AG04449 (cell line): ENCODE measurements at regions of chr11 and their contacts with region 1.

Region 1: GRCh38 chr11:61254403-61255025 is 13.5 kb downstream of the PGA5 start:
- DNase-seq: no peak
- H3K4me3 ChIP-seq: no peak overlapping the region
- CTCF ChIP-seq: peak; percentile 95

Region 2: GRCh38 chr11:61129639-61130523 is 124.6 kb before region 1 on chr11:
- CTCF ChIA-PET with region 1: no interaction called
- POLR2A ChIA-PET with region 1: no interaction called
- DNase-seq: peak; percentile 65
- H3K4me3 ChIP-seq: peak overlapping the region; percentile 36
- CTCF ChIP-seq: peak; percentile 100

Region 3: DNA sequence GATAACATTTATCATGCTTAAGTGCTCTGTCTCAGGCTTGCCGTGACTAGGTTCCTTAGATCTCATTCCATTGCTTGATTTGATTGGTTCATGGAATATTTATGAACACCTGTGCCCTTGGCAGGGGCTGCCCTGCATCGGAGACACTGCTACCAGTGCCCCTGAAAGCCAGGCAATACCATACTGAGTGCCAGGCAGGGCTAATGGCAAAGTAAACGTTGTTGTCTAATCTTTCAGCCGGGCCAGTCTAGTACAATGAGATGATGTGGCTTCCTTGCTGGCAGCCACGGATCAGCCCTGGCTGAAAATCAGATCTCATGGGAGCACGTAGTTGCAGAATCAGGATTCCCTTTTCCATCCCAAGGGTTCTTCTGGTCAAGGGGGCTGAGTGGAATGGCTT is 56.2 kb before region 1 on chr11:
- CTCF ChIA-PET with region 1: no interaction called
- POLR2A ChIA-PET with region 1: no interaction called
- DNase-seq: no peak
- H3K4me3 ChIP-seq: no peak overlapping the region
- CTCF ChIP-seq: no peak

Region 4: GRCh38 chr11:61270354-61271076 is 16.0 kb after region 1 on chr11:
- CTCF ChIA-PET with region 1: interaction called, 99 read pairs
- POLR2A ChIA-PET with region 1: no interaction called
- DNase-seq: peak; percentile 9
- H3K4me3 ChIP-seq: no peak overlapping the region
- CTCF ChIP-seq: no peak

Region 5: DNA sequence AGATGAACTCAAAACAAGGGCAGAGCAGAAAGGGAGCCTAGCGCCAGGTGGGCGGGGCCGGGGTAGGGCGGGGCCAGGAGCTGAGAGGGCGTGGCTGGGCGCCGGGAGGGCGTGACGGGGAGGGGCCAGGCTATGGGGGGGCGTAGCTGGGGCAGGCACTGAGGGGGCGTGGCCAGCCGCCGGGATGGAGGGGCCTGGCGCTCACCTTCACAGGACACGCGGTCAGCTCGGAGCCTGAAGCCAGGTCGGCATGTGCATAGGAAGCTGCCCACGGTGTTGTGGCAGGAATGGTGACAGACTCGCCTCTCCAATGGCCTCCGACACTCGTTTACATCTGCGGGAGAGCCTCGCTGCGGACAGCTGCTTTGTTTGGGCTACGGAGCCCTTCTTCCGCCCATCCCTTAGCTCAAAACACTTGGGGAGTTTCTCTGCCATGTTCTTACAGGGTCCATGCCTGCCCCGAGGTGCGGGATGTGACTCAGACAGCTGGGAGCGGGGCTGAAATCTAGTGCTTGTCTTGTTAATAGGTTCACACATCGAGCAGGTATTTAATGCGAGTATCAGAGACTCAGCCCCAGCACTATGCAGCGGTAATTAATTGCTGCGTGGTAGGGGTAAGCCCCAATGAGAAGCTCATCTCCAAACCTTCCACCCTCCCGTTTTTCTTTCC is 27.2 kb after region 1 on chr11:
- CTCF ChIA-PET with region 1: interaction called, 12 read pairs
- POLR2A ChIA-PET with region 1: no interaction called
- DNase-seq: no peak
- H3K4me3 ChIP-seq: no peak overlapping the region
- CTCF ChIP-seq: no peak

Region 6: DNA sequence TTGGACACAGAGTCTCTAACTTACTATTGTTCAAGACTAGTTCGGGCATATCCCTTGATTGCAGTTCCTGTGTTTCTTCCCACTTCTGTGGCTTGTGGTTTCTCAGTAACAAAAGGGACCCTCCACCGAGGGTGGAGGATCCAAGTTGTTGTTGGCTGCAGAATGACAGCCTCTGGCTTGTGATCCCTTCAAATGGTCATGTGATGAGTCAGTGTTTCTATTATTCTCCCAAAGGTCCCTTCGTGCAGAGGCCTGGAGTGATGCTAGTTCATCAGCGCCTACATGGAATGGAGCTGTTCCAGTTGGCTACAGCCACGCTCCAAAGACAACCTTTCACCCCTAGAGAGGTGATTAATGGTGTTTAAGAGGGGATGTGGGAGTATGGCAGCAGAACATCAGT is 43.2 kb after region 1 on chr11:
- CTCF ChIA-PET with region 1: interaction called, 12 read pairs
- POLR2A ChIA-PET with region 1: no interaction called
- DNase-seq: peak; percentile 40
- H3K4me3 ChIP-seq: no peak overlapping the region
- CTCF ChIP-seq: no peak

Region 7: GRCh38 chr11:61325649-61326414 is 71.3 kb after region 1 on chr11:
- CTCF ChIA-PET with region 1: interaction called, 11 read pairs
- POLR2A ChIA-PET with region 1: no interaction called
- DNase-seq: no peak
- H3K4me3 ChIP-seq: no peak overlapping the region
- CTCF ChIP-seq: no peak